ENCODE measurements at regions of chr2 and their contacts with region 1.

Region 1: DNA sequence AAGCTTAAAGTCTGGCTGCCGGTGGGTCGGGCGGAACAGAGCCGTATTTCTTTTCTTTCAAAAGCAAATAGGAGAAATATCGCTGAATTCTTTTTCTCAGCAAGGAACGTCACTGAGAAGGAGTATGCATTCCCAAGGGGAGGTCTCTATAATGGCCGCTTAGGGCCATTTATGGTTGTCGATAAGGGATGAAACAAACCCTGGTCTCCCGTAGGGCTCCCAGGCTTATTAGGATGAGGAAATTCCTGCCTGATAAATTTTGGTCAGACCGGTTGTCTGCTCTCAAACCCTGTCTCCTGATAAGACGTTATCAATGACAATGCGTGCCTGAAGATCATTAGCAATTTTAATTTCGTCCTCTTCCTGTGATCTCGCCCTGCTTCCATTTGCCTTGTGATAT is 227.7 kb upstream of the ZEB2 start:
- DNase-seq: no peak
- H3K4me3 ChIP-seq: no peak overlapping the region
- H3K27ac ChIP-seq: no peak overlapping the region
- H3K4me1 ChIP-seq: no peaks in the 10 kb centered on the region
- H3K27me3 ChIP-seq: peaks cover 2% of the 10 kb centered on the region
- CTCF ChIP-seq: no peak

Region 2: DNA sequence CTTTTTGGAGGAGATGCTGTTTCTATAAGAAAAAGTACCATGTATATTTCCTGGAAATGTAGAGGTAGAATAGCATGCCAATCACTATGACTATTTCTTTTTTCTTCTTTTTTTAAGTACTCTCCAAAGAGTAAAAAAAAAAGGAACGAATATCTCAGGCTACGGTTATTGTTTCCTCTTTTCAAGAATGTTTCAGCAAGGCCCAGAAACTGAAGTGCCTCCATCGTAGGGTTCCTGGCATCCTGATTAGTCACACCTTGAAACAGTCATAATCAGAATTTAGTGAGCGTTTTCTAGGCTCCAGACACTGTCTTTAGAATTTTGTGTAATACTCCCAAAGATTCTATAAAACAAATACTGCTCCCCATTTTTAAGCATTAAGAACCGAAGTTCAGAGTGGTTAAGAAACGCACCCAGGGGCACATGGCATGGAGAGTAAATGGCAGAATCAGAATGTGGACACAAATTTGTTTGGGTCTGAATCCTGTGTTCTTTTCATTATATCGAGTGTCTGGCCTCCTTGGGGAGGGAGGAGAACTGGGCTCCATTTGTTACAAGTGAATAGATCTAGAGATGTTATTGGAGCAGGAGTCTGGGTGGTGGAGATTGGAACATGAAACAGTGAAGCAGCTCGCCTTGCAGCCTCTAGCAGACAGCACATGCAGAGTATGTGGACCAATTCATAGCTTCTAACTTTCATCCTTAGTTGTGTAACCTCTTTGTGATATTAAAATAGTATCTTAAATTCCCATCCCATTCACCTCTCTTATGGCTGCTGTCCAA is 254.4 kb before region 1 on chr2:
- CTCF ChIA-PET with region 1: no interaction called
- dilution Hi-C with region 1: no loop called
- in situ Hi-C with region 1: no loop called
- intact Hi-C with region 1: no loop called
- DNase-seq: no peak
- H3K4me3 ChIP-seq: no peak overlapping the region
- H3K27ac ChIP-seq: no peak overlapping the region
- H3K4me1 ChIP-seq: no peaks in the 10 kb centered on the region
- H3K27me3 ChIP-seq: no peaks in the 10 kb centered on the region
- CTCF ChIP-seq: no peak

Region 3: DNA sequence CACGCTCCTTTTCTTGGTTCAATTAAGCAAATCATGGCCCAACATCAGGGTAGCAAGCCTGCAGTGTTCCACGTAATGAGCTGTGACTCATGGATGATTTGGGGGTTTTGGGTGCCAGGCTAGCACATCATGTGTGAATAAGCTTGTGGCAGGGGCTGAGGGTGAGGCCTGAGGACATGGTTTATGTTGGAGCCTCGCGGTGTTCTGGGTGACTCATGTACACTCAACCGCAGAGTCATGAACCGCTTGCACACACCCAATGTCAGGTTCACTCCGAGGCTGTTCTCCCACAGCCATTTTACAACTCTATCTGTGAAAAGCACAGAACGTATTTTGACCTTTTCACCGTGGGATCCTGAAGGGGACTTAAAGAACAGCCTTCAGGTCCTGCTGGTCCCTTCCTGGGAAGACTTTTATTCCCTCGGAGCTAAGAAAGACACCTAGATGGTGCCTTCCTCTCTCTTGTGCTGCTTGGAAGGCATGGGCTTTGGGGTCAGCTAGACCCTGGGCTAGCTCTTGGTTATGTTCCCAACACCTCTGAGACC is 87.8 kb before region 1 on chr2:
- CTCF ChIA-PET with region 1: interaction called, 16 read pairs
- dilution Hi-C with region 1: no loop called
- in situ Hi-C with region 1: no loop called
- intact Hi-C with region 1: no loop called
- DNase-seq: peak; percentile 100
- H3K4me3 ChIP-seq: no peak overlapping the region
- H3K27ac ChIP-seq: peak overlapping the region; percentile 78
- H3K4me1 ChIP-seq: peaks cover 25% of the 10 kb centered on the region
- H3K27me3 ChIP-seq: no peaks in the 10 kb centered on the region
- CTCF ChIP-seq: no peak

Region 4: DNA sequence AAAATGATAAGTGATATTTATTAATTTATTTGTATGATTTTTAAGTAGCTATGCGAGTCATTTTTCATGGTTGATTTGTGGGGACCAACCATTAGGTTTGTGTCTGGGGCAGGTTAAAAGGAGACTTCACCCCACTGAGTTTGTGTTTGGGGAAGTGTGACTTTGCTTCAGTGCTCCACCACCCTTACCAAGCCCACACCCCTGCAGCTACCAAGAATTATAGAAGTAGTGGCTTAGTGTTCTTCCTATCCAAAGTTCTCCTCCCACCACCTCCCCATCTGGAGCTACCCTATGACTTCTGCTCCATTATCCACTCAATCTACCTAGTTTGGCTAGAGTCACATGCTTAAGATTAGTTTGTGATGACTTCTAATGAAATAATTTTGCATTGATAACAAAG is 45.5 kb before region 1 on chr2:
- CTCF ChIA-PET with region 1: no interaction called
- dilution Hi-C with region 1: no loop called
- in situ Hi-C with region 1: no loop called
- intact Hi-C with region 1: no loop called
- DNase-seq: no peak
- H3K4me3 ChIP-seq: no peak overlapping the region
- H3K27ac ChIP-seq: no peak overlapping the region
- H3K4me1 ChIP-seq: peaks cover 7% of the 10 kb centered on the region
- H3K27me3 ChIP-seq: no peaks in the 10 kb centered on the region
- CTCF ChIP-seq: no peak